A549 (cell line): ENCODE measurements at regions of chr9 and their contacts with region 1.

Region 1: DNA sequence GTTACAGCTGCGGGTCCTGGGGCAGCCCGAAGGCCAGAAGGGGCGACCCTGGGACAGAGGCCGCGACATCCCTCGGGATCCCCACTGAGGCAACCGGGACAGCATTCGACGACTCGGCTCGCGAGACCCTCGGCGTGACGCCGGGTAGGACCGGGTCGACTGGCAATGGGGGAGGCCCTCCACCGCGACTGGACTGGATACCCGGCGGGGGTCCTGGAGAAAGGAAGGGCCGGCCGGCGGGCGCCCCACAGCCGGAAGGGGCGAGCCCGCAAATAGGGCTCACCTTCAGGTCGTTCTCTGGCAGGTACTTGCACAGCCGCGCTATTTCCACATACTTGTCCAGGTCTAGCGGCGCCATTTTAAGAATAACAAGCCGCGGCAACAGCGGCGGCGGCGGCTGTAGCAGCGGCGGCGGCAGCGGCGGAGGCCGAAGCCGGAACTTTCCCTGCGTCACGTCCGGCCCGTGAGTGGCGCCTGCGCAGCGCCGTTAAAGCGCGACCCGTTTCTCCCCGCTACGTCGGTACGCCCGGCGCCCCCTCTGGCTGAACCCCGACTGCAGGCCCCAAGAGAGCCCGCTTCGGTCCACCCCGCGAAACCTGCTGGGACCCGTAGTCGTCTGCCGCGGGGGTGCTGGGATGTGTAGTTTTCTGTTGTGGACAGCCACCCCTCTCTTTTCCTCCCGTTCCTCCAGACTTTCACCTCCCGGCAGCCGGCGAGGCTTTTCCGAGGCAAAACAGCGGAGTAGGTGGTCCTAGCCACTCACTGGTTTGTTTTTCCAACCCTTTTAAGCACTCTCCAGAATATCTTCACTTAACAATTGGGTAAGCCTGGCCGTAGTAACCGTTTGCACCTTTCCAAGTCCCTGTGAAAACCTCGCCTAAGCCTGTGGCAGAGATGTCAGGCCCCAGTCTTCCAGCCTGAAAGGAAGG is at the start of gene PPP6C:
- DNase-seq: peak; percentile 97
- ATAC-seq: peak; percentile 98 to 99
- H3K4me3 ChIP-seq: peak within 1 kb of the TSS; percentile 75
- H3K27ac ChIP-seq: peak within 1 kb of the TSS; percentile 88
- H3K4me1 ChIP-seq: peaks cover 20% of the 10 kb centered on the region; the same call in 2 of the 3 replicates
- CTCF ChIP-seq: peak; percentile 57
- EP300 ChIP-seq: no peak
- POLR2A ChIP-seq: peak; percentile 74
- RAD21 ChIP-seq: peak in 1 of 2 experiments; percentile 17; a peak in 2 of 5 replicates
- polyA plus RNA-seq, gene PPP6C: 28.9 and 36.2 TPM in 2 replicates

Region 2: DNA sequence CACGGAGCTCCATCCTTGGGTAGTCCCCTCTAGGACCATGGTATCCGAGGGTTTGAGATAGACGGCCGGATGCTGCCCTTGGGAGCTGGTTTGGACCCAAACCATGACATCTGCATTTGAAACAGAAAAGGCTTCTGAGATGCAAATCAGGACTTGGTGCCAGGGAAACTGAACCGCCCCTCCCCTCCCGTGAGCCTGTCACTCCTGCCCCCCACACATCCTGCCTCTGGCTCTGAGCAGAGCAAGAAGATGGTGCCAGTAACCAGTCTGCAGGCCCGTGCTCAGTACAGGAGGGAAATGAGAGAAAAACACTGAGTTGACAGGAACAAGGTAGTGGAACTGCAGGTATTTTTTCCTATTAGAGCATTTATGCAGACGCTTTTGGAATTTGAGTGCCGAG is 309.1 kb before region 1 on chr9:
- CTCF ChIA-PET with region 1: no interaction called
- POLR2A ChIA-PET with region 1: no interaction called
- DNase-seq: no peak
- ATAC-seq: no peak
- H3K4me3 ChIP-seq: no peak overlapping the region
- H3K27ac ChIP-seq: no peak overlapping the region
- H3K4me1 ChIP-seq: no peaks in the 10 kb centered on the region
- CTCF ChIP-seq: no peak
- EP300 ChIP-seq: no peak
- POLR2A ChIP-seq: no peak
- RAD21 ChIP-seq: no peak

Region 3: DNA sequence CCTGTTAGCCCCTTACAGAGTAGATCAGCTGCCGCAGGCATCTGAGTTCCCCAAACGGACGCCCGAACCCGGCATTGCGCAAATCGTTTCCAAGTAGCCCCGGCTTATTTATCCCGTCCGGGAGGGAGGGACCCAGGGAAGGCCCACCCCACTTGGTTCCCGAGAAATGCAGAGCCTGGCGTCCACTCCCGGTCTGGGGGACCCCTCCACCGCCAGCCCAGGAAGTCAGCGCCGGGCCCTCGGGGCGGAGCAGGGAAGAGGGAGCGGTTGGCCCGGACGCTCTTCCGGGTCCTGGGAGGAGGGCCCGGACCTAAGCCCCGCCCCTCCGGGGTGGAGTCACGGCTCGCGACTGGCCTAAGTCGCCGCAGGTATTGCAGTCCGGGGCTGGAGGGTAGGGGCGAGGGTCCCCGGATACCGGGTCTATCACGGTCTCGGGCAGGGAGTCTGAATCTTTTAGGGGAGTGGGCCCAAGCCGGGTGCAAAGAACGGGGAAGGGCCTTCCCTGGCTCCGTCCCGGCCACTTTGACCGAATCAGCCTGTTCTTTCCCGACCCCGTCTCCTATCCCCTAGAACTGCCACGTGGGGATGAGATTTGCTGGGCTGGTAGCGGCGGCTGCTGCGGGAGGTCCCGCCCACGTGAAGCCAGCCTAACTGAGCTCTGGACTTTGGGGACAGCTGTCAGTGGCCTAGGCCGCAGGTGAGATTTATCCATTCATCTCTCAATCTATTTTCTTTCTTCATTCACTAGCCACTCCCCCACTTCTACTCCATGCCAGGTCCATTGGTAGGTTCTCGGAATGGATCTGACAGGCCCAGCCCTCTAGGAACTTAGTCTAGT is 10.8 kb after region 1 on chr9 and contains the start of gene RABEPK:
- CTCF ChIA-PET with region 1: interaction called, 4 read pairs
- POLR2A ChIA-PET with region 1: interaction called, 12 read pairs
- DNase-seq: peak; percentile 93 to 94
- ATAC-seq: peak; percentile 99
- H3K4me3 ChIP-seq: peak within 1 kb of the TSS; percentile 62
- H3K27ac ChIP-seq: peak within 1 kb of the TSS; percentile 86 to 90
- H3K4me1 ChIP-seq: peaks cover 16% of the 10 kb centered on the region
- CTCF ChIP-seq: no peak
- EP300 ChIP-seq: no peak
- POLR2A ChIP-seq: peak; percentile 81
- RAD21 ChIP-seq: peak in 1 of 2 experiments; percentile 1; a peak in 1 of 5 replicates
- polyA plus RNA-seq, gene RABEPK: 50.1 and 53.5 TPM in 2 replicates